MCF 10A (cell line): ENCODE measurements at regions of chr1 and their contacts with region 1.

Region 1: DNA sequence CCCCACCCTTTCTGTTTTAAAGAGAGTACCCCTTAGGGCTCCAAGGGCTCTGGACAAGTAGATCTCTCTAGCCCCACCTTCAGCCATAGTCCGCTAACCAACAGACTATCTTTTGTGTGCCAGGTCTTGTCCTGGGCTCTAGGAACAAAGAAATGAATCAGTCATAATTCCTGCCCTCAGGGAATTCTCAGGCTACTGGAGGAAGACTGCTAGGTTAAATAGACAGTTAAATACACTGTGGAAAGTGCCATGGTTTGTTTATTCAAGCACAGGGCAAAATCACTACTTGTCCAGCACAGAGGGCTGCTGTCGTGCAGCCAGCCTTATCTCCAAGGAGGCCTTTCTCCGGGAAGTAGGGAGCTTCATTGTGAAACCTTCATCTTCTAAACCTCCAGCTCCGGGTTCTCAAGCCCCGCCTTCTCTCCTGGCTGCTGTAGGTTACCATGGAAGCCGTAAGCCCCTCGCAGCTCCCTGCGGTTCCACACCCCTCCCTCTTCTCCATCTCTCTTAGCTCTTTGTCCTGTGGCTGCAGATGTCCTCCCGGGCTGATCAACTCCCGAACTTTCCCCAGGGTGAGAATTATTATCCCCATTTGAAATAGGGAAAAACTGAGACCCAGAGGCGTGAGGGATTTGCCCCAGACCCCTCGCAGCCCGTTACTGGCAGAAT is 29.8 kb downstream of the SHISAL2A start:
- DNase-seq: peak; percentile 98
- H3K4me3 Mint-ChIP-seq: peak overlapping the region; percentile 64
- H3K27ac Mint-ChIP-seq: peak overlapping the region; percentile 68
- H3K4me1 Mint-ChIP-seq: peaks cover 65% of the 10 kb centered on the region
- H3K27me3 Mint-ChIP-seq: no peaks in the 10 kb centered on the region
- CTCF ChIP-seq: no peak

Region 2: DNA sequence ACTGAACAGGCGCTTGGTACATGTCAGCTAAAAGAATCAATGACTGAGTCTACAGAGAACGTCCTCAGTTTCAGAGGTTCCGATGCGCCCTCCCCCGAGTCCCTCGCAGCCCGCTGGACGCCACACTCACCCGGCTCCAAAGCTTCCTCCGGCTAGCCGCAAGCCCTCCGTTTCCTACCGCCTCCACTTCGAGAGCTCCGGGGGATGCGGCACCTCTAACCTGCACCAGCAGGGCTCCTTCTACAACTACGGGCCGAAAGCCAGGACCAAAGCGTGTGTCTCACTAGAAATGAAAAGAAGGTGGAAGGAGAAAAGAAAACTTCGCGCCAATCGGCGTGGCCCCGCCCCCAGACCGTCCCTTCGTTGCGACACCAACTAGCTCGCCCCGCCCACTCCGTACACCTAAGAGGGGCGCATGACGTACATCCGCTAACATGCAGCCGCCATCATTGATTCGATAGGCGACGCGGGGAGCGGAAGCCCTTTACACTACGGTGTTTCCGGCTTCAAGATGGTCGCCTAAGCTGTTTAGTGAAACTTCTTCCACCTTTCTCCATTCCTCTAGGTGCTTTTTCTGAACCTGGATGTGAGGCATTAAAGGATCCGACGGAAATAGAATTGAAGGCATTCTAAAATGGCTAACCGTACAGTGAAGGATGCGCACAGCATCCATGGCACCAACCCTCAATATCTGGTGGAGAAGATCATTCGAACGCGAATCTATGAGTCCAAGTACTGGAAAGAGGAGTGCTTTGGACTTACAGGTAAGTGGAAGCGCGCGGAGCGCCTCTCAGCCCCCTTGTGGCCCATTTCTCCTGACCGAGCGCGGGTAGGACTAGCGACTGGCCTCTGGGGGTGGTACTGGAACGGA is 258.4 kb before region 1 on chr1 and contains the starts of genes ORC1 and PRPF38A:
- CTCF ChIA-PET with region 1: interaction called, 3 read pairs
- POLR2A ChIA-PET with region 1: interaction called, 6 read pairs
- intact Hi-C with region 1: loop called (anchors 5 kb)
- DNase-seq: peak; percentile 98
- H3K4me3 Mint-ChIP-seq: peak within 1 kb of the TSS; percentile 100
- H3K27ac Mint-ChIP-seq: peak within 1 kb of the TSS; percentile 97
- H3K4me1 Mint-ChIP-seq: peaks cover 7% of the 10 kb centered on the region
- H3K27me3 Mint-ChIP-seq: no peaks in the 10 kb centered on the region
- CTCF ChIP-seq: peak; percentile 36
- total RNA-seq, gene ORC1: 1.8 and 2.7 TPM in 2 replicates
- total RNA-seq, gene PRPF38A: 63.8 TPM in 2 replicates

Region 3: GRCh38 chr1:52460694-52461093 is 202.1 kb before region 1 on chr1:
- CTCF ChIA-PET with region 1: no interaction called
- POLR2A ChIA-PET with region 1: interaction called, 6 read pairs
- intact Hi-C with region 1: loop called (anchors 10 kb)
- DNase-seq: peak; percentile 69
- H3K4me3 Mint-ChIP-seq: no peak overlapping the region
- H3K27ac Mint-ChIP-seq: no peak overlapping the region
- H3K4me1 Mint-ChIP-seq: peaks cover 7% of the 10 kb centered on the region
- H3K27me3 Mint-ChIP-seq: no peaks in the 10 kb centered on the region
- CTCF ChIP-seq: no peak

Region 4: DNA sequence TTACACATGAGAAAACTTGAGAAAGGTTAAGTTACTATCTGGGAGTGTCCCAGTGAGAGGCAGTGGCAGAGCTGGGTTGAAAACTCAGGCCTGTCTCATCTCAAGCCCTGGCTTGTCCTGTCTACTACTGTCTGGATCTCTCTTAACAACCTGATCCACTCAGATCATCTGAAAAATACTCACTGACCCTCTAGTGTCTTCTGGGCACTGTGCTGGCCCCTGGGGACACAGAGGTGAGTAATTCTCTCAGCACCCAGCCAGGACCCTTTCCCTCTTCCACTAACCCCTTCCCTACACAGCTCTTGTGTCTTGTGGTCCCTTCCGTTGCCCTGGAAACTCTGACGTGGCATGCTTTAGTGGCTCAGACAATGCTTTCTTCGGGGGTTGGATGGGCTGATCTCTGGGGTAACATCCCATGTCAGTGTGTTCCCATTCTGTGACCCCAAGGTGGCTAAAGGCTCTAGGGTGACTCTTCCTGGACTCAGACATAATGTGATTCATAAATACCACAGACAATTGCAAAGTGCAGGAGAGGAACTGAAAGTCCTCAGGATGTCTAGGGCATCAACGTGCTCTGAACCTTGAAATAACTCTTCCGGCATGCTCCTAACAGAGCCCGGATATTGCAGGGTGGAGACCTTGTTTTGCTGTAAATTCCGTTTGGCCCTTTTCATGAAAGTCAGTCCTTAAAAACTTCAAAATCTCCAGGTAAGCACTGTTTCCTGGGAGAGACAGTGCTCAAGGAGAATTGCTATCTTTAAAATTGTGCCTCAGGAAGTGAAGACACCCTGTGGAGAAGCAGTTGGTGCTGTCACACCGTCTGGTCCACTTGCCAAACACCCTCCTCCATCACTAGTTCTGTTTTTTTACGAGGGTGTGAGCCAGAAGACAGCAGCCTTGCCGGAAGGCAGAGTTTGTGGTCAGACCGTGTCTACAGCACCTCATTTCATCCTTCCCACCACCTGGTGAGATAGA is 25.8 kb before region 1 on chr1:
- CTCF ChIA-PET with region 1: interaction called, 9 read pairs
- POLR2A ChIA-PET with region 1: interaction called, 19 read pairs
- intact Hi-C with region 1: no loop called
- DNase-seq: peak; percentile 27
- H3K4me3 Mint-ChIP-seq: no peak overlapping the region
- H3K27ac Mint-ChIP-seq: peak overlapping the region; percentile 83
- H3K4me1 Mint-ChIP-seq: peaks cover 15% of the 10 kb centered on the region
- H3K27me3 Mint-ChIP-seq: no peaks in the 10 kb centered on the region
- CTCF ChIP-seq: no peak

Region 5: DNA sequence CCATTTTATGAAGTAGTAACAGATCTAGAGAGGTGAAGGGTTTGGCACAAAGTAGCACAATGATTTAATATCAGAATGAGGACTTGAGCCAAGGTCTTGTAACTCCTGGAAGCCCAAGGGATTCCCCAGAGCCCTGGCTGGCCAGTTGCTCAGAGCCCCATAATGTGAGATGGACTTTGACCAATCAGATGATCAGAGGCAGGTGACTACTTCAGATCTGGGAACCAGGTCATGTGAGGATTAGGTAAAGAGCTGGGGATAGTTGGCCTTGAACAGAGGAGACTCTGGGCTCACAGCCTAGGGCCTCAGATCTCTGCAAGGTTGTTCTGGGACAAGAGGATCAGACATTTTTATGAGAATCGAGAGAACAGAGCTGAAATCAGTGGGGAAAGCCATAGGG is 10.9 kb before region 1 on chr1:
- CTCF ChIA-PET with region 1: no interaction called
- POLR2A ChIA-PET with region 1: interaction called, 24 read pairs
- intact Hi-C with region 1: no loop called
- DNase-seq: no peak
- H3K4me3 Mint-ChIP-seq: no peak overlapping the region
- H3K27ac Mint-ChIP-seq: no peak overlapping the region
- H3K4me1 Mint-ChIP-seq: peaks cover 10% of the 10 kb centered on the region
- H3K27me3 Mint-ChIP-seq: no peaks in the 10 kb centered on the region
- CTCF ChIP-seq: no peak

Region 6: DNA sequence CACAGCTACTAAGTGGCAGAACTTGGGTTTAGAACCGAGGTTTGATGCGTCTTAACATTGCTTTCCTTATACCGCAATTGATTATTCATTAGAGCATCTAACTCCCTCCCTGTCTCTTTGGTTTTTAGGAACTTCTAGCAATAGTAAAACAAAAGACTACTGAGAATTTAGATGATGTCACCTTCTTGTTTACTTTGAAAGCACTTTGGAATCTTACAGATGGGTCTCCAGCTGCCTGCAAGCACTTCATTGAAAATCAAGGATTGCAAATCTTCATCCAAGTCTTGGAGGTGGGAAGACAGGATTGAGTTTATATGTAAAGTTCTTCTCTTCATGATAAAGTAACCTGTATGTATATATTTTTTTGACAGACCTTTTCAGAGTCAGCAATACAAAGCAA is 214.8 kb after region 1 on chr1:
- CTCF ChIA-PET with region 1: no interaction called
- POLR2A ChIA-PET with region 1: no interaction called
- intact Hi-C with region 1: no loop called
- DNase-seq: no peak
- H3K4me3 Mint-ChIP-seq: no peak overlapping the region
- H3K27ac Mint-ChIP-seq: no peak overlapping the region
- H3K4me1 Mint-ChIP-seq: no peaks in the 10 kb centered on the region
- H3K27me3 Mint-ChIP-seq: no peaks in the 10 kb centered on the region
- CTCF ChIP-seq: no peak

Region 7: GRCh38 chr1:52970149-52970548 is 307.4 kb after region 1 on chr1:
- CTCF ChIA-PET with region 1: no interaction called
- POLR2A ChIA-PET with region 1: no interaction called
- intact Hi-C with region 1: no loop called
- DNase-seq: peak; percentile 8
- H3K4me3 Mint-ChIP-seq: no peak overlapping the region
- H3K27ac Mint-ChIP-seq: no peak overlapping the region
- H3K4me1 Mint-ChIP-seq: no peaks in the 10 kb centered on the region
- H3K27me3 Mint-ChIP-seq: no peaks in the 10 kb centered on the region
- CTCF ChIP-seq: no peak